Left cardiac atrium (tissue), 4 donors: ENCODE measurements at regions of chr15 and their contacts with region 1.

Region 1: DNA sequence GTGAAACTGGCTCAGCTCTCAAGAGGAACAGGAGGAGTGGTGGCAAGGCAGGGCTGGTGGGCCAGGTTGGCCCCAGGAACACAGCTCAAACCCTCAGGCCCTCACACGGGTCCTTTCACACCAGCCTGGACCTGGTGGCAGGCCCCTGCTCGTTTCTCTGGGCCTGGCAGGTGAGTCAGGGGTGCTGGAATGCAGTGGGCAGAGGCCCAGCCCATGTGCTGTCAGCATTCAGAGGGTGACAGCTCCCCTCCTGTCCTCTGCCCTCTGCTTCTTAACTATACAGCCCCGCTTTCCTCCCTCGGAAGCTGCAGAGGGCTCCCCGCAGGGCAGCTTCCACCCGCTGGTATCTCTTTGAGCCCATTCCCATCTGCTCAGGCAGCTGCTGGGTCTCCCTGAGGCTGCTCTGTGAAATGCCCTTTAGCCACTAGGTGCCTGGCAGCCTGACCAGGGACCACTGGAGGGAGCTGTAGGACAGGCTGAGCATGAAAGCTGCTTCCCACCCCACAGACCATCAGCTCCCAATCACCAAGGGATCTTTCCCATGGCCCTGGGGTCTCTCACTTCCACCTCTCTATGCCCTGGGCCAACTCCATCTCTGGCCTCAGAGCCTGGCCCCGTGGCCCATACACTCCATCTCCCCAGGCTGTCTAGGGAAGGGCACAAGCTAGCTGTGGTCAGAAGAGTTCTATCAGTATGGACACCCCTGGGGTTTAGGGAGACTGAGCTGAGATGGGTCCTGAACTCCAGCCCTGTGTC is 24.8 kb downstream of the SHF start:
- DNase-seq: peak; percentile 84
- ATAC-seq: peak; percentile 35 to 56

Region 2: DNA sequence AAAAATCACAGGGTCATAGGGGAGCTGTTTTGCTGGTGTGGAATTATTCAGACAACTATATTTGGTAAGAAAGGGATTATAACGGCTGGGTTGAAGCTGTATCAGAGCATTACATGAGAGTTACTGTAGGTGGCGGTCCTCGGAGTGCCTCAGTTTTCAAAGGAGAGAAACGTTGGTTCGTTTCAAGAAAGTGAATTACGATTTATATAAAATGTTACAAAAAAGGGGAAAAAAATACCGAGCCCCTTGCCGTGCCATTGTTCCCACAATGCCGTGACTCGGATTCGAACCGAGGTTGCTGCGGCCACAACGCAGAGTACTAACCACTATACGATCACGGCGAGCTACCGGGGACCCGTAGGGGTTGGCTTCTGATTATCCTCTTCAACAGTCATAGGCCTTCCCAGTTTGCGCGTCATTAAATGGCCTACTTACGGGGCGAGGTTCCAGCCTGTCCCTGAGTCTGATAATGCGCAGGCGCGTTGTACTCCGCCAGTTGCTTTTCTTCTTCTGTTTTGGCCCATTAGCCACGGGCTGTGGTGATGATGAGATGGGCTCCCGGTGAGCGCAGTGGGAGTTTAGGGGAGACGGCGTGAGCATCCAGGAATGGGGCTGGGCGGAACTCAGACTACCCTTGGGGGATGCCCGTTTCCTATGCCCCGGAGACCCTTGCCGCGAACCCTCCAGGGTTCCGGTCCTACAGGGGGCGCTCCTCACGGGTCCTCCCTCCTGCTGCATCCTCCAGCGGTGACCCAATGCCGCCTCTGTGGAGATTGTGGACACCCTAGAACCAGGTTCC is 35.6 kb after region 1 on chr15:
- intact Hi-C with region 1: loop called in 1 of 2 experiments (anchors 5 kb)
- DNase-seq: peak; percentile 94
- ATAC-seq: peak; percentile 80 to 81

Region 3: DNA sequence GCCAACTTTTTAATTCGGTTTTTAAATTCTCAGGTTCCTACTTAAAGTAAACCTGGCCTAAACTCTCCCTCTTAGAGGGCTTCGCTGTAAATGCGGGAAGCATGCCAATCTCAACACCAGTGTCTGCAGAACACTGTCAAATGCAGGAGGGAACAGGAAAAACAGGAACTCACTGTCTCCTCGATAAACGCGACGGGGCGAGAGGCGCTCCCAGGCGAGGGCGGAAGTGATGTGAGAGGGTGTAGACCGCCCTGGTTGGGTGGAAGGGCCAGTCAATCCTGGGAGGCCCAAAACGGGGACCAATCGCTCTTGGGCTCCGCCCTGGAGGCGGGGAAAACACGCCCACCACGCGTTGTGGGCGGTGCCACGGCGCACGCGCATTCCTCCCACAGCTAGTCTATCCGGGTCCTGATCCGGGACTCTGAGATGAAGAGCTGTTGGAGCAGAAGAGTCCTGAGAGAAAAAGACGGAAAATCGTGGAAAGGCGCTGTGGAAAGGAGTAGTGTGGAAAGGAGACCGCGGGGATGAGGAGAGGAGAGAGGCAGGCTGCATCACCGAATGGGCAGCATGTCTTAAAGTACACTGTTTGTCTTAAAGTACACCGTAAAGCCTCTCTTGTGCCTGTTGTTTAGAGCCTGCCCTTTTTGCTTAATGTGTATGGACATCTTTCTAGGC is 116.2 kb after region 1 on chr15:
- intact Hi-C with region 1: loop called in 1 of 2 experiments (anchors 2 kb)
- DNase-seq: peak; percentile 98
- ATAC-seq: peak; percentile 100

Region 4: GRCh38 chr15:45399381-45400212 is 236.6 kb after region 1 on chr15:
- intact Hi-C with region 1: loop called in 1 of 2 experiments (anchors 5 kb)
- DNase-seq: no peak
- ATAC-seq: no peak

Region 5: DNA sequence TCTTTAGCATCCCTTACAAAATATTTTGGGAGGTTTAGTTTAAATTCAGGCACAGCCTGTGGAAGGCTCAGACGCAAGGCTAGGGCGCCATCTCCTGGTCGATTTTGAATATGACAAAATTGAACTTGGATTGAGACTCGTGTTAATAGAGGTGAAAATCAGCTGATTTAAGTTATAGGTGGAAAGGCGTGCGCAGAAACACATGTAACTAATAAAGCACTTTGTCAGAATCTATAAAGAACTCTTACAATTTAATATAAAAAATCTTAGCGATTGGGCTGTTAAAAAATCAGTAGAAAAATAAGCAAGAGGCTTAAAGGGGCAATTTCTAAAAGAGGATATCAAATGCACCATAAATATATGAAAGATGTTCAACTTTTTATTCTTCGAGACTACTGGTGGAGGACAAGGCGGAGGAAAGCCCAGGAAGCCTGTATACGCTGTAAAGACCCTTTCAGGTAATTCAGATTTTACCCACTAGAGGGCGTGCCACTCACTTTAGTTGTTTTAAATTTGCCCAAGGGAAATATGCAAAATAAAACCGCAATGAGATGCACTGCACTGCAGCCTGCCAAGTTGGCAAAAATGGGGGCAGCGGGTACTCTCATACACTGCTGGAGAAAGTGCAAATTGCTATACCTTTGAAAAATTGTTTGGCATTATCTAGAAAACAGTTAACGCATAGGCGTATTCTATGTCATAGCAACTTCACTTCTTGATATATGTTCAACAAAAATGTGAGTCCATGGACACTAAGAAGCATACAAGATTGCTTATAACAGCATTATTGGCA is 294.9 kb after region 1 on chr15:
- intact Hi-C with region 1: loop called in 1 of 2 experiments (anchors 5 kb)
- DNase-seq: peak; percentile 54
- ATAC-seq: peak; percentile 74 to 77